HEK293 (cell line): ENCODE measurements at regions of chr19 and their contacts with region 1.

Region 1: GRCh38 chr19:7629347-7630054 is at the starts of genes PET100 and XAB2:
- H3K4me3 ChIP-seq: peak within 1 kb of the TSS; percentile 91
- H3K27ac ChIP-seq: no peak within 1 kb of the TSS; the same call in 1 of the 2 replicates
- H3K4me1 ChIP-seq: peaks cover 4% of the 10 kb centered on the region; the same call in 1 of the 2 replicates
- CTCF ChIP-seq: no peak

Region 2: DNA sequence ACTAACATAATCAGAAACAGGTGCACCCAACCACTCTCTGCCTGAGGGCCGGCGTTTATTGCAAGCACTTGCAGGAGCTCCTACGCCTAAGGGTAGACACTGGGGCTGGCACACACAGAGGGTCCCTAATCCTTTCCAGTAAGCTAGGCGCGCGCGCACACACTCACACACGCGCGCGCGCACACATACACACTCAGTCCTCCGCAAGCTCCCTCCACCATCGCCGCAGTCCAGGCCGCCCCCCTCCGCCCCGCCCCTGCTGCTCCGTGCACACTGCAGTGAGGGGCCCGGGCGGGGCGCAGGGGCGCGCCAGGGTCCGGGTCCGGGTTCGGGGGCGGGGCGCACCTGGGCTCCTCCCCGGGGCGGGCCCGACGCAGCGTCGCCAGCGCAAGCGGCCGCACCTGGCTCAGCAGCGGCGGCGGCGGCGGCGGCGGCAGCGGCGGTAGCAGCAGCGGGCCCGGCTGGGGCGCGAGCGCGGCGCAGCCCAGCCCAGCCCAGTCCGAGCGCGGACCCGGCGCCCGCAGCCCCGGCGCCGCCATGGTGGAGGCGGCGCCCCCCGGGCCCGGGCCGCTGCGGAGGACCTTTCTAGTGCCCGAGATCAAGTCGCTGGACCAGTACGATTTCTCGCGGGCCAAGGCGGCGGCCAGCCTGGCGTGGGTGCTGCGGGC is 33.9 kb before region 1 on chr19 and contains the start of gene CAMSAP3:
- CTCF ChIA-PET with region 1: no interaction called
- POLR2A ChIA-PET with region 1: interaction called, 13 read pairs
- H3K4me3 ChIP-seq: peak within 1 kb of the TSS; percentile 70
- H3K27ac ChIP-seq: no peak within 1 kb of the TSS; the same call in 1 of the 2 replicates
- H3K4me1 ChIP-seq: peaks cover 8% of the 10 kb centered on the region
- CTCF ChIP-seq: no peak

Region 3: GRCh38 chr19:7618771-7619514 is 10.6 kb before region 1 on chr19:
- CTCF ChIA-PET with region 1: no interaction called
- POLR2A ChIA-PET with region 1: interaction called, 14 read pairs
- H3K4me3 ChIP-seq: no peak overlapping the region
- H3K27ac ChIP-seq: peak overlapping the region; percentile 31; the same call in 1 of the 2 replicates
- H3K4me1 ChIP-seq: no peaks in the 10 kb centered on the region; the same call in 1 of the 2 replicates
- CTCF ChIP-seq: no peak